ENCODE measurements at regions of chr17 and their contacts with region 1.

Region 1: DNA sequence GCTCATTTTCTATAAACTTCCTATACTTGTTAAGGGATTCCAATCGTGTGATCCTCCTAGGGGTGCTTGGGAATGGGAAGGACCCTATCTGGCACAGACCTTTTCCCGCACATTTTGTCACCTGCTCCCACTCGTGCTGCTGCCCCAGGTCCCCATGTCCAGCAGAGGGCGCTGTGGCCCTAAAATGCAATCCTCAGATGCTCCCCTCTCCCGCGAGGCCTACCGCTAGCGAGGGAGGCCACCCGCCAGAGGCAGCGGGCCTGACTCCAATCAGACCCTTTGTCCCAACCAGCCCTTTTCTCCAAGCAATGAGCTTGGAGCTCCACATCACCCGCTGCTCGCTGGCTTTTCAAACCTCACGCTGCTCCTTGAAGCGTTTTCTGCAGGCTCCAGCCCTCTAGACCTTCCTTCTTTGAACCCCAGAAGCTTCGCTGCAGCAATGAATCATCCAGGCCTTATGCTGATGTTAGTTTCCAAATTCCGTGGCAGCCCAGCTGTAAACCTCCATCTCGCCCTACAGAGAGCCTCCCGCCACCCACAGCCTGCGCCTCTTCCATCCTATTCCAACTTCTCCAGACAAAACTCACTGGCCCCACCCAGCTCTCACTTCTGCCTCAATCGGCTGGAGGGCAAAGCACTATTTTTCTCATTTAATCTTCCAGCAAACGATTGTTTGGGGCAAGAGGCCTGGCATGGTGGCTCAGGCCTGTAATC is 23.6 kb upstream of the FZD2 start:
- DNase-seq: peak; percentile 82
- ATAC-seq: peak; percentile 94
- H3K4me3 Mint-ChIP-seq: peak overlapping the region; percentile 29
- H3K27ac Mint-ChIP-seq: peak overlapping the region; percentile 5
- H3K4me1 Mint-ChIP-seq: peaks cover 7% of the 10 kb centered on the region
- H3K27me3 Mint-ChIP-seq: peaks cover 6% of the 10 kb centered on the region
- CTCF ChIP-seq: peak; percentile 86

Region 2: DNA sequence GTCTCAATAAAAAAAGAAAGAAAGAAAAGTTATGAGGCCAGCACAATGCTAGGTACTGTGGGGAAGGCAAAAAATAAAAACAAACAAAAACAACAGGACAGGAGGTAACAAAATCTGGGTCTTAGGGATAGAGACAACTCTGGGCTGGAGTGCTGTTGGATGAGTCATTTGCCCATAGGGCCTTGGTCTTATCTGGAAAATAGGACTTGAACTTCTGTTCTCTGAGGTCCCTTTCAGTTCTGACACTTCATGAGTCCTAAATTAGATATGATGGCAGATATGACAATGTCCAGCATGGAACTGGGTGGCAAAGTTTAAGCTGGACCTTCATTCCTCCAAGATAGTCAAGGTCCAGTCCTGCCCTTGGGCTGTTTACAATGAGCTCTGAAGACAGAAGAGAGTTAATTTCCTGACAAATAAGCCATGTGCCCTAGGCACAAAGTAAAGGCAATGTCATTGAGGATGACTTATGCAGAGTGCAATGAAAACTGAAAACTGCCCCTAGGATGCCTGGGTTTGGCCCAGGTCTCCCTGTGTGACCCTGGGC is 401.3 kb before region 1 on chr17:
- CTCF ChIA-PET with region 1: no interaction called
- POLR2A ChIA-PET with region 1: no interaction called
- intact Hi-C with region 1: no loop called
- DNase-seq: no peak
- ATAC-seq: no peak
- H3K4me3 Mint-ChIP-seq: no peak overlapping the region
- H3K27ac Mint-ChIP-seq: peak overlapping the region; percentile 35
- H3K4me1 Mint-ChIP-seq: peaks cover 6% of the 10 kb centered on the region
- H3K27me3 Mint-ChIP-seq: no peaks in the 10 kb centered on the region
- CTCF ChIP-seq: no peak

Region 3: DNA sequence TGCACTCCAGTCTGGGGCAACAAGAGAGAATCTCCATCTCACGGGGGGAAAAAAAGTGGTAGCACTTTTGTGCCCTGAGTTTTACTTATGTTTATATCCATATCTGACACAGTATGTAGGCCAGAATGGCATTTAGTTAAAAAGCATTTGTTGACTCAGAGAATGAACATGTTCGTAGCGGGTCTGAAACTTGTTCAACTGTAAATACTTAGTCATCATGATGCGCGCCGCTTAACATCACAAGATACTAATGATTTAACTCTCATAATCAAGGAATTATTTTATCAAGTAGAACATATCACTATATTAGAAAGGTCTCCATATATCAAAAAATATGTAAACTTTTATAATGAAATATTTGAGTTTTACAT is 89.0 kb before region 1 on chr17:
- CTCF ChIA-PET with region 1: no interaction called
- POLR2A ChIA-PET with region 1: no interaction called
- intact Hi-C with region 1: no loop called
- DNase-seq: no peak
- ATAC-seq: no peak
- H3K4me3 Mint-ChIP-seq: no peak overlapping the region
- H3K27ac Mint-ChIP-seq: no peak overlapping the region
- H3K4me1 Mint-ChIP-seq: peaks cover 7% of the 10 kb centered on the region
- H3K27me3 Mint-ChIP-seq: no peaks in the 10 kb centered on the region
- CTCF ChIP-seq: no peak

Region 4: GRCh38 chr17:44636562-44636961 is 102.9 kb after region 1 on chr17:
- CTCF ChIA-PET with region 1: interaction called, 19 read pairs
- POLR2A ChIA-PET with region 1: no interaction called
- intact Hi-C with region 1: loop called (anchors 1 kb)
- DNase-seq: no peak
- ATAC-seq: no peak
- H3K4me3 Mint-ChIP-seq: no peak overlapping the region
- H3K27ac Mint-ChIP-seq: no peak overlapping the region
- H3K4me1 Mint-ChIP-seq: no peaks in the 10 kb centered on the region
- H3K27me3 Mint-ChIP-seq: peaks cover 3% of the 10 kb centered on the region
- CTCF ChIP-seq: no peak

Region 5: DNA sequence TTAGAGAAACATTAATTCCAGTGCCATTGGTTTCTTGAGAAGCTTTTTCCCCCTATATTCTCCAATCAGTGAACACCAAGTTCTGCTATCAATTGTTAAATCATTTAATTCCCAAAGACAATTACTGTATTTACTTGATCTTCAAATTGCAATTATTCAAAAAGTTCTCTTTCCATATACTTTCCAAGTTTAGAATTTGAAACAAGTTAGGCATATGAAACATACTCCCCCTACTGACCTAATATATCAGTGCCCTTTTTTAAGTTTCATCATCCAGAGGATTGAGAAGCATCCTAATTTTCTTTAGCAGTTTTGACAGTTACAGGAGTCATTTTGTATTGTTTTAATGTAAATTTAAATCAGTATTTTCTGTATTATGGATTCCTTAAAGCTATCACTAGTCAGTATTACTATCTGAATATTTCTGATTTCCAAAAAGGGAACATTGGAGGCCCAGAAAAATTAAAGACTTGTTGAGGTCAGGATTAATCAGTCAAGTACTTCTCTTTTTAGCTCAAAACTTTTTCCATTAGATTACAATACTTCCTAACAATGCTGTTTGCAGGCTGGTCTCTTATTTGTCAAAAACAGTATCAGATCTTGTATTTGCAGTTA is 138.9 kb after region 1 on chr17:
- CTCF ChIA-PET with region 1: interaction called, 17 read pairs
- POLR2A ChIA-PET with region 1: no interaction called
- intact Hi-C with region 1: loop called (anchors 1 kb)
- DNase-seq: no peak
- ATAC-seq: no peak
- H3K4me3 Mint-ChIP-seq: no peak overlapping the region
- H3K27ac Mint-ChIP-seq: no peak overlapping the region
- H3K4me1 Mint-ChIP-seq: no peaks in the 10 kb centered on the region
- H3K27me3 Mint-ChIP-seq: no peaks in the 10 kb centered on the region
- CTCF ChIP-seq: no peak

Region 6: GRCh38 chr17:44864866-44865660 is 331.4 kb after region 1 on chr17:
- CTCF ChIA-PET with region 1: interaction called, 13 read pairs
- POLR2A ChIA-PET with region 1: no interaction called
- intact Hi-C with region 1: no loop called
- DNase-seq: peak; percentile 26
- ATAC-seq: peak; percentile 52
- H3K4me3 Mint-ChIP-seq: no peak overlapping the region
- H3K27ac Mint-ChIP-seq: no peak overlapping the region
- H3K4me1 Mint-ChIP-seq: no peaks in the 10 kb centered on the region
- H3K27me3 Mint-ChIP-seq: no peaks in the 10 kb centered on the region
- CTCF ChIP-seq: peak; percentile 41